T-cell (primary cell): ENCODE measurements at regions of chr17 and their contacts with region 1.

Region 1: DNA sequence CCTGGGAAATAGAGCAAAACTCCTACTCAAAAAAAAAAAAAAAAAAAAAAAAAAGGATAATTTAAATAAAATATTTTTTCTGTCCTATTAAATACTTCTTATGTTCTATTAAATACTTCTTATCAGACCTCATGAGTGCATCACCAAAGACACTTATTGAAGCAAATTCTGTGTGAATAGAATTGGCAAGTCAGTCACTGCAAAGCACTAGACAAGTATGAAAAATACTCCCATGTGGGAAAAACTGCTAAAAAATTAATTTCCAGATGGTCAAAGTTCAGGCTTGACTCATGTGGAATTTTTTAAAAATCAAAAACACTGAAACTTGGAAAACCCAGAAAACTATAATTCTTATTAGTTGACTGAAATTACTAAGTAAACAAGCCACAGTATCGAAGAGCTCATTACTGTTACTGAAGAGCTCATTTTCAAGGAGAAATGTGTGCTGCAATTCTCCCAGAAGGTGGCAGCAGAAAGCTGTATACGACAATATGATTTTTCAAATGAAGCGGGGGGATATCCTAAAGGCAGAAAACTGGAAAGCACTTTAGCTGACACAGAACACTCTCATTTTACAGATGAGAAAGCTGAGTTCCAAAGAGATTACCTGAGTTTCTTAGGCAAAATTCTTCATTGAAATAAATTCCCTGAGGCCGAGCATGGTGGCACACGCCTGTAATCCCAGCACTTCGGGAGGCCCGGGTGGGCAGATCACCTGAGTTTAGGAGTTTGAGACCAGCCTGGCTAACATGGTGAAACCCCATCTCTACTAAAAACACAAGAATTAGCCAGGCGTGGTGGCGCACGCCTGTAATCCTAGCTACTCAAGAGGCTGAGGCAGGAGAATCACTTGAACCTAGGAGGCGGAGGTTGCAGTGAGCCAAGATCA is 15.9 kb upstream of the FBXO47 start:
- DNase-seq: peak in 31 of 35 experiments; percentile 17 to 81 (median 44)
- ATAC-seq: peak; percentile 48 to 78 (median 64)
- H3K4me3 ChIP-seq: no peak overlapping the region
- H3K4me3 Mint-ChIP-seq: no peak overlapping the region
- H3K27ac ChIP-seq: no peak overlapping the region
- H3K27ac Mint-ChIP-seq: no peak overlapping the region
- H3K4me1 ChIP-seq: no peaks in the 10 kb centered on the region
- H3K4me1 Mint-ChIP-seq: peaks cover 3 to 7% (median 5%) of the 10 kb centered on the region in 3 donors
- H3K27me3 ChIP-seq: no peaks in the 10 kb centered on the region
- H3K27me3 Mint-ChIP-seq: no peaks in the 10 kb centered on the region

Region 2: GRCh38 chr17:38943607-38944006 is 39.5 kb before region 1 on chr17:
- CTCF ChIA-PET with region 1: no interaction called
- POLR2A ChIA-PET with region 1: no interaction called
- DNase-seq: no peak
- ATAC-seq: no peak
- H3K4me3 ChIP-seq: no peak overlapping the region
- H3K4me3 Mint-ChIP-seq: no peak overlapping the region
- H3K27ac ChIP-seq: no peak overlapping the region
- H3K27ac Mint-ChIP-seq: no peak overlapping the region
- H3K4me1 ChIP-seq: no peaks in the 10 kb centered on the region
- H3K4me1 Mint-ChIP-seq: peaks cover 0 to 5% (median 0%) of the 10 kb centered on the region in 3 donors
- H3K27me3 ChIP-seq: no peaks in the 10 kb centered on the region
- H3K27me3 Mint-ChIP-seq: no peaks in the 10 kb centered on the region

Region 3: GRCh38 chr17:39018267-39019134 is 35.4 kb after region 1 on chr17:
- CTCF ChIA-PET with region 1: interaction called, 7 to 10 read pairs
- POLR2A ChIA-PET with region 1: no interaction called
- DNase-seq: peak in 5 of 35 experiments; percentile 9 to 27 (median 11)
- ATAC-seq: peak in 3 of 4 experiments; percentile 15 to 26 (median 24)
- H3K4me3 ChIP-seq: no peak overlapping the region
- H3K4me3 Mint-ChIP-seq: peak overlapping the region in 1 of 3 donors; percentile 67
- H3K27ac ChIP-seq: no peak overlapping the region
- H3K27ac Mint-ChIP-seq: peak overlapping the region; percentile 77 to 82
- H3K4me1 ChIP-seq: peaks cover 15 to 33% of the 10 kb centered on the region in 2 experiments
- H3K4me1 Mint-ChIP-seq: peaks cover 28 to 31% (median 31%) of the 10 kb centered on the region in 3 donors
- H3K27me3 ChIP-seq: no peaks in the 10 kb centered on the region
- H3K27me3 Mint-ChIP-seq: no peaks in the 10 kb centered on the region

Region 4: GRCh38 chr17:39153599-39154051 is 170.5 kb after region 1 on chr17:
- CTCF ChIA-PET with region 1: interaction called, 25 to 134 read pairs
- POLR2A ChIA-PET with region 1: no interaction called
- DNase-seq: peak; percentile 76 to 97 (median 90)
- ATAC-seq: peak; percentile 57 to 66 (median 59)
- H3K4me3 ChIP-seq: peak overlapping the region; percentile 92 to 99
- H3K4me3 Mint-ChIP-seq: peak overlapping the region; percentile 95 to 100 (median 100)
- H3K27ac ChIP-seq: peak overlapping the region; percentile 70
- H3K27ac Mint-ChIP-seq: peak overlapping the region; percentile 96 to 99
- H3K4me1 ChIP-seq: peaks cover 2 to 53% of the 10 kb centered on the region in 2 experiments
- H3K4me1 Mint-ChIP-seq: peaks cover 43 to 56% (median 47%) of the 10 kb centered on the region in 3 donors
- H3K27me3 ChIP-seq: peaks cover 0 to 16% of the 10 kb centered on the region in 2 experiments
- H3K27me3 Mint-ChIP-seq: peaks cover 0 to 9% of the 10 kb centered on the region in 2 donors

Region 5: GRCh38 chr17:39164675-39165143 is 181.6 kb after region 1 on chr17:
- CTCF ChIA-PET with region 1: interaction called, 4 to 31 read pairs
- POLR2A ChIA-PET with region 1: interaction called in 1 of 2 experiments, 11 read pairs
- DNase-seq: peak; percentile 51 to 83 (median 69)
- ATAC-seq: peak; percentile 91 to 94 (median 93)
- H3K4me3 ChIP-seq: peak overlapping the region; percentile 76 to 85
- H3K4me3 Mint-ChIP-seq: peak overlapping the region; percentile 79 to 86 (median 85)
- H3K27ac ChIP-seq: no peak overlapping the region
- H3K27ac Mint-ChIP-seq: peak overlapping the region in 1 of 2 donors; percentile 11
- H3K4me1 ChIP-seq: peaks cover 5 to 40% of the 10 kb centered on the region in 2 experiments
- H3K4me1 Mint-ChIP-seq: peaks cover 23 to 32% (median 30%) of the 10 kb centered on the region in 3 donors
- H3K27me3 ChIP-seq: peaks cover 0 to 54% of the 10 kb centered on the region in 2 experiments
- H3K27me3 Mint-ChIP-seq: peaks cover 23 to 33% of the 10 kb centered on the region in 2 donors

Region 6: DNA sequence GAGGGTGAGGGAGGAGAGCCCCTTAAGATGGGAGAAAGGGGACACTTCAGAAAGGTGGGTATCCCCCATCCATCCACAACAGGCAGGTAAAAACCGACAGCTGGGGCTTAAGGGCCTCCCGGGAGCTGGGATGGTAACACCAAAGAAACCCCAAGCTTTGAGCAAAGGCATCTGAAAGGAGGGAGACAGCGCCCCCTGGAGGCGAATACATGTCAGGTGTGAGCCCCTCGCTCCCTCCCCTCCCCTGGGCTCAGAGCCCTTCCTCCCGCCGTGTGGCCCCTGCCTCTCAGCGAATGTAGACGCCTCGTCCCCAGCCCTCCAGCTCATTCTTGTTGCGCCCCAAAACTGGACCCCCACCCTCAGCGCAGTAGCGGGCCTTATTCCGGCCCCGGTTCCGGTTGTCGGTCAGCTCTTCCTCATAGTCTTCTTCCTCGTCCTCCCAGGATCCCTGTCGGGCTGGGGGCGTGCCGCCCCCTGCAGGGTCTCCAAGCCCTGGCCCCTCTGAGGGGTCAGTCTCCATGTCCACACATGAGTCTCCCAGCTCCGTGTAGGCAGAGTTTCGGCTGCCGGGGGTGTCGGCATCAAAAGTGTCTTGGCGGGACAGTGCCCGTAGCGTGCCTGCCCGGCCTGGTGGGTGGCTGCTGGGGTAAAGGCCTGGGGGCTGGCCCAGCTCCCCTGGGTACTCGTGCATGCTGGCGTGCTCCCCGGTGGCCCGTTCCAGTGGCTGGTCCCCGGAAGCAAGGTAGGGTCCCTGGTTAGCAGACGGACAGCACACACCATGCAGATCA is 192.0 kb after region 1 on chr17:
- CTCF ChIA-PET with region 1: interaction called, 4 to 50 read pairs
- POLR2A ChIA-PET with region 1: interaction called in 1 of 2 experiments, 11 read pairs
- DNase-seq: peak; percentile 46 to 93 (median 75)
- ATAC-seq: peak; percentile 81 to 93 (median 85)
- H3K4me3 ChIP-seq: no peak overlapping the region
- H3K4me3 Mint-ChIP-seq: no peak overlapping the region
- H3K27ac ChIP-seq: no peak overlapping the region
- H3K27ac Mint-ChIP-seq: no peak overlapping the region
- H3K4me1 ChIP-seq: peaks cover 0 to 21% of the 10 kb centered on the region in 2 experiments
- H3K4me1 Mint-ChIP-seq: peaks cover 11 to 20% (median 16%) of the 10 kb centered on the region in 3 donors
- H3K27me3 ChIP-seq: peaks cover 0 to under 1% of the 10 kb centered on the region in 2 experiments
- H3K27me3 Mint-ChIP-seq: peaks cover 0 to 2% of the 10 kb centered on the region in 2 donors

Region 7: GRCh38 chr17:39235555-39236449 is 252.7 kb after region 1 on chr17:
- CTCF ChIA-PET with region 1: interaction called in 1 of 2 experiments, 12 read pairs
- POLR2A ChIA-PET with region 1: no interaction called
- DNase-seq: peak in 30 of 35 experiments; percentile 16 to 74 (median 36)
- ATAC-seq: peak in 2 of 4 experiments; percentile 6 to 27
- H3K4me3 ChIP-seq: no peak overlapping the region
- H3K4me3 Mint-ChIP-seq: no peak overlapping the region
- H3K27ac ChIP-seq: peak overlapping the region; percentile 29
- H3K27ac Mint-ChIP-seq: peak overlapping the region; percentile 1 to 61
- H3K4me1 ChIP-seq: peaks cover 0 to 62% of the 10 kb centered on the region in 2 experiments
- H3K4me1 Mint-ChIP-seq: peaks cover 40 to 45% (median 44%) of the 10 kb centered on the region in 3 donors
- H3K27me3 ChIP-seq: peaks cover 0 to 22% of the 10 kb centered on the region in 2 experiments
- H3K27me3 Mint-ChIP-seq: peaks cover 0 to 13% of the 10 kb centered on the region in 2 donors

Region 8: GRCh38 chr17:39244600-39245570 is 261.8 kb after region 1 on chr17:
- CTCF ChIA-PET with region 1: interaction called in 1 of 2 experiments, 13 read pairs
- POLR2A ChIA-PET with region 1: no interaction called
- DNase-seq: peak; percentile 58 to 91 (median 79)
- ATAC-seq: peak; percentile 89 to 93 (median 92)
- H3K4me3 ChIP-seq: no peak overlapping the region
- H3K4me3 Mint-ChIP-seq: no peak overlapping the region
- H3K27ac ChIP-seq: no peak overlapping the region
- H3K27ac Mint-ChIP-seq: no peak overlapping the region
- H3K4me1 ChIP-seq: peaks cover 0 to 15% of the 10 kb centered on the region in 2 experiments
- H3K4me1 Mint-ChIP-seq: peaks cover 12 to 15% (median 14%) of the 10 kb centered on the region in 3 donors
- H3K27me3 ChIP-seq: peaks cover 0 to 3% of the 10 kb centered on the region in 2 experiments
- H3K27me3 Mint-ChIP-seq: peaks cover 0 to 2% of the 10 kb centered on the region in 2 donors

Region 9: DNA sequence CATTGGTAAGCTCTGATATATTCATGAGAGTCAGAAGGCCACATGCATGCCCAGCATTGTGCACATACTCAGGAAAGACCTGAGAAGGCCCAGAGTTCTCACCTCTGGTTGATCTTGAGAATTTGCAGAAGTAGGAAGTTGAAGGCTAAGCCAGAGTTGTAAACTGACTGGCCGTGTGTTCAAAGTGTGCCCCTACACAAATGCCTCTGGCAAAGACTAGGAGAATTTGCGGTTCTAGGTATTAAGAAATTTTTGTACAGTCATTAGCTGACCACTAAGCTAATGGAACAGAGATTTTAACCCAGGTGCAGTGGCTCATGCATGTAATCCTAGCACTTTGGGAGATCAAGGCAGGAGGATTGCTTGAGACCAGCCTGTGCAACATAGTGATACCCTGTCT is 393.3 kb after region 1 on chr17:
- CTCF ChIA-PET with region 1: no interaction called
- POLR2A ChIA-PET with region 1: no interaction called
- DNase-seq: no peak
- ATAC-seq: no peak
- H3K4me3 ChIP-seq: no peak overlapping the region
- H3K4me3 Mint-ChIP-seq: no peak overlapping the region
- H3K27ac ChIP-seq: no peak overlapping the region
- H3K27ac Mint-ChIP-seq: no peak overlapping the region
- H3K4me1 ChIP-seq: peaks cover 0 to 3% of the 10 kb centered on the region in 2 experiments
- H3K4me1 Mint-ChIP-seq: peaks cover 28 to 36% (median 32%) of the 10 kb centered on the region in 3 donors
- H3K27me3 ChIP-seq: no peaks in the 10 kb centered on the region
- H3K27me3 Mint-ChIP-seq: no peaks in the 10 kb centered on the region